Aorta (tissue), 5 donors: ENCODE measurements at regions of chr3 and their contacts with region 1.

Region 1: DNA sequence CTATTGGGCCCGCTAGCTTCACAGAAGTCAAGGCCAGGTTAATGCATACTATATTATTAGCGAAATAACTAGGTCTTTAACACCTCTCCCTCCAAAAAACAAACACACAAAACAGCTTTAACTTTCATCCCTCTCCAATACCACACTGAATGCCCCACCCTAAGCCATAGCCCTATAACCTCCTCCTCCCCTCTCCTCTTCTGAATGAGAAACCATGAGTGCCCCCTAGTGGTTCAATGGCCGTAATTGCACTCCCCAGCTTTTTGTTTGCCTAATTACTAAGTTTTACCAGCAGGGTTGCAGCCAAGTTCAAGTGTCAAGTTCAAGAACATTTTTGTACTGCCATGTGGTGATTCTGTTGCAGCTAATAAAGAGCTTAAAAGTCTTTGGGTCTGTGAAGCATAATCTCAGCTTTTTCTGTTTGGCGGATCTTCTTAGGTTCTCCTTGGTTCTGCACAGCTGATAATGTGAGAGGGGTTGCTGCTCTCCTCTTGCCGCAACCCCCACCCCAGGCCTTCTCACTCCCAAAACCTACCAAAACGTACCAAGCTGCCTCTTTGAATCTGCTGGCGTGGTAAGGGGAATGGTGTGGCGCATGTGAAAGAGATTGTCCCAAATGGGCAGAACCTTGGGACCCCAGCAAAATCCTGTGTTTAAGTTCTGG is 57.9 kb downstream of the RPL22L1 start:
- DNase-seq: peak in 1 of 2 donors; percentile 64
- ATAC-seq: peak; percentile 75
- H3K4me3 ChIP-seq: no peak overlapping the region
- H3K27ac ChIP-seq: no peak overlapping the region
- H3K4me1 ChIP-seq: no peaks in the 10 kb centered on the region
- H3K27me3 ChIP-seq: no peaks in the 10 kb centered on the region

Region 2: DNA sequence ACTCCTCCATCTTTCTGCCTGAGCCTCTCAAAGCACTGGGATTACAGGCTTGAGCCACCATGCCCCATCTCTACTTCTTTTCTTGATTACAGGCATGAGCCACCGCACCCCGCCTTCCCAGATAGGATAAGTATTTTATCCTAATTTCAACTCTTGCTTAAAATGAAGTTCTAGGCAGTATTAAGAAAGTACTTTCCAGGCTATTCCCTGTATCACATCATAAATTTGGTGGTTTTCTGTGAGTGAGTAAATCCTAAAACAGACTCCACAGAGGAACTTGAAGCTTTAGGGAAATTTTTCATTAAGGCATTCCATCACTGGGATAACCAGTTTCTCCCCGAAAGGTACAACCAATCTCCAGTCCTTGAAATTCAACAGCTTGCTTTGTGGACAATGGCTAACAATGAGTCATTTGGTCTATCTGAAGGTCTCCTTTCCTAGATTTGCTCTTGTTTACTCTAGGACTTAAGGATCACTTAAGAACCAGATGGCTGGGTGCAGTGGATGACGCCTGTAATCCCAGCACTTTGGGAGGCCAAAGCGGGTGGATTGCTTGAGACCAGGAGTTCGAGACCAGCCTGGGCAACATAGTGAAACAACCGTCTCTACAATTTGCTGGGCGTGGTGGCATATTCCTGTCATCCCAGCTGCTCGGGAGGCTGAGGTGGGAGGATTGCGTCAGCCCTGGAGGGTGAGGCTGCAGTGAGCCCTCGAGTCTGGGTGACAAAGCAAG is 504.2 kb before region 1 on chr3:
- intact Hi-C with region 1: loop called in 1 of 2 experiments (anchors 5 kb)
- DNase-seq: no peak
- ATAC-seq: no peak
- H3K4me3 ChIP-seq: no peak overlapping the region
- H3K27ac ChIP-seq: no peak overlapping the region
- H3K4me1 ChIP-seq: no peaks in the 10 kb centered on the region
- H3K27me3 ChIP-seq: no peaks in the 10 kb centered on the region

Region 3: GRCh38 chr3:170414202-170414663 is 397.8 kb before region 1 on chr3:
- intact Hi-C with region 1: loop called (anchors 2 kb)
- DNase-seq: peak in 1 of 2 donors; percentile 50
- ATAC-seq: peak; percentile 78
- H3K4me3 ChIP-seq: no peak overlapping the region
- H3K27ac ChIP-seq: no peak overlapping the region
- H3K4me1 ChIP-seq: no peaks in the 10 kb centered on the region
- H3K27me3 ChIP-seq: no peaks in the 10 kb centered on the region

Region 4: DNA sequence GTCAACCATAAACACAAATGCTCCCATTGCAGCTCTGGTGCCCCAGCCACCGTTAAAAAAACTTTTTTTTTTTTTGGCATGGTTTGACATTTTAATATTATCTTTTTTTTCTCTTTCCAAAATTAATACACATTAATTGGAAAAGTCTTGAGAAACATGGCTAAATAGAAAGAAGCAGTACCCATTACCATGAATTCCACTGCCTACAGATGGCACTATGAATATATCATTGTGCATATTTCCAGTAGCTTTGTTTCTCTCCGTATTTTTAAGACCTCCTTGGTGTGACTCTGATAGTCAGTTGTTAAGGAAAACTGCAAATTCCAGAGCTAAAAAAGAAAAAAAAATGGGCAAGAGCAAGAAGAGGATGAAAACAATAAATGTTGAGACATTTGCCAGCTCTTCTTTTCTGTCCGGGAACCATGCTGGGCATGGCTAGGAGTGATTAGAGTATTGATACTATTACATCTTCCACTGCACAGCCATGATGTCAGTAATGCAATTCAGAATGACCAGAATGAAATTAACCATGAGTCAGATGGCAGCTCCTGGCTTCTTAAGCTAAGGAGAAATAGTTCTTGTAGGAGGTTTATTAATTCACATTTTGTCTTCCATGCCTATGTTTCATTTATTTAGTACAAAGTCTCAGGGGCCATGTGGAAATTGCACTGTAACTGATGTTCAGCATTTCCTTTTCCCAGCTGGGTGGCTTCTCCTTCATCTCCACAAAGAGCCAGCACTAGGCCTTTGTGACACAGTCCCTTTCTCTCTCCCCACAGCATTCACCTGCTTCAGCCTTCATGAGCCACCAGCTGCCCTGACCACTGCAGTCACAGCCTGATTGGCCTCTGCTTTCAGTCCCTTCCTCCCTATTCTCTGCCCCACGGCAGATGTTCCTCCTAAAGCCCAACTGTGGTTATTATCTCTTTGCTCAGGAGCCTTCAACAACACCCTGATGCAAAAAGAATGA is 258.0 kb before region 1 on chr3:
- intact Hi-C with region 1: loop called (anchors 5 to 10 kb)
- DNase-seq: no peak
- ATAC-seq: no peak
- H3K4me3 ChIP-seq: no peak overlapping the region
- H3K27ac ChIP-seq: no peak overlapping the region
- H3K4me1 ChIP-seq: no peaks in the 10 kb centered on the region
- H3K27me3 ChIP-seq: no peaks in the 10 kb centered on the region

Region 5: GRCh38 chr3:170614214-170614966 is 197.7 kb before region 1 on chr3:
- intact Hi-C with region 1: loop called in 1 of 2 experiments (anchors 10 kb)
- DNase-seq: no peak
- ATAC-seq: peak; percentile 83
- H3K4me3 ChIP-seq: no peak overlapping the region
- H3K27ac ChIP-seq: no peak overlapping the region
- H3K4me1 ChIP-seq: no peaks in the 10 kb centered on the region
- H3K27me3 ChIP-seq: no peaks in the 10 kb centered on the region

Region 6: GRCh38 chr3:170896781-170897180 is 84.7 kb after region 1 on chr3:
- intact Hi-C with region 1: no loop called
- DNase-seq: no peak
- ATAC-seq: no peak
- H3K4me3 ChIP-seq: no peak overlapping the region
- H3K27ac ChIP-seq: no peak overlapping the region
- H3K4me1 ChIP-seq: no peaks in the 10 kb centered on the region
- H3K27me3 ChIP-seq: no peaks in the 10 kb centered on the region

Region 7: GRCh38 chr3:172181932-172182586 is 1370.0 kb after region 1 on chr3:
- intact Hi-C with region 1: no loop called
- DNase-seq: no peak
- ATAC-seq: peak; percentile 15
- H3K4me3 ChIP-seq: no peak overlapping the region
- H3K27ac ChIP-seq: peak overlapping the region in 1 of 2 donors; percentile 17
- H3K4me1 ChIP-seq: peaks cover 6 to 14% of the 10 kb centered on the region in 2 donors
- H3K27me3 ChIP-seq: no peaks in the 10 kb centered on the region